IMR-90 (cell line): ENCODE measurements at regions of chr1 and their contacts with region 1.

Region 1: GRCh38 chr1:48572646-48573261 is 100.8 kb upstream of the SPATA6 start:
- DNase-seq: peak; percentile 23
- ATAC-seq: peak; percentile 83
- H3K4me3 ChIP-seq: no peak overlapping the region
- H3K27ac ChIP-seq: no peak overlapping the region
- H3K4me1 ChIP-seq: no peaks in the 10 kb centered on the region
- H3K27me3 ChIP-seq: no peaks in the 10 kb centered on the region
- CTCF ChIP-seq: peak; percentile 40
- POLR2A ChIP-seq: no peak
- RAD21 ChIP-seq: peak; percentile 59

Region 2: DNA sequence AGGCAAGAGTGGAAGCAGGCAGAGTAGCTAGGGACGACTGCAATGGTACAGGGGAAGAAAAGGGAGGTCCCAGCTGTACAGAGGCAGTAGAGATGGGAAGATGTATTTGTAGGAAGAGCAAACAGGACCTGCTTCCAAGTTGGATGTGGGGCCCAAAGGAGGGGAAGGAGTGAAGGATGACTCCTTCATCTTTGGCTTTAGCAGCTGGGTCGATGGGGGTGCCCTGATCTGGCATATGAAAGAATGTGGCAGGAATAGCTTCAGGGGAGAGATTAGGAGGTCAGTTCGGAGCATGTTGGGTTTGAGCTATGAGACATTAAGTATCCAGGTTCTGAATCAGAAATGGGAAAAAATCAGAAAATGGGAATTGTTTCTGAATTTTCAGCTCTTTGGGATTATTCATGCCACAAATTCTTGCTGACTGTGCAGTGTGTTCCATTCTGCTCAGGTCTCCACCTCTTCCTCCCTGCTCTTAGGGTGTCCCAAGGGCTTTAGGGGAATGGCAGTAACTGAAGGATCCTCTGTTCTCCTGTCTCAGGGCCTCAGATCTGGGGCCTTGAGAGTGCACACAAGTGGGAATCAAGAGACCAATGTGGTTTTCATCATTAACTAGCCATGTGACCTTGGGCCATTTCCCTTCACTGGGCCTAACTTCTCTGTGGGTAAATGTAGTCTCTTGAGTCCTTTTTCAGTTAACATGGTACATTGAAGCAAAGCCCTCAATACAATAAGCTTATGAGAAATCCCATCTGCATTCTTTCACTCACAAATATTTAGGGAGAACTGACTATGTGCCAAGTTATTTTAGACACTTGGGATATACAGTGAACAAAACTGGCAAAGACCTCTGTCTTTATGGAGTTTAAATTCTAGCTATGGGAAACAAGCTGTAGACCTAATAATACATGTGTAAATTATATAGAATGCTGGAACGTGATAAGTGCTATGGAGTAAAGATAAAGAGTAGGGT is 25.2 kb before region 1 on chr1:
- CTCF ChIA-PET with region 1: no interaction called
- POLR2A ChIA-PET with region 1: no interaction called
- dilution Hi-C with region 1: no loop called
- in situ Hi-C with region 1: no loop called
- intact Hi-C with region 1: no loop called
- DNase-seq: no peak
- ATAC-seq: no peak
- H3K4me3 ChIP-seq: no peak overlapping the region
- H3K27ac ChIP-seq: no peak overlapping the region
- H3K4me1 ChIP-seq: no peaks in the 10 kb centered on the region
- H3K27me3 ChIP-seq: no peaks in the 10 kb centered on the region
- CTCF ChIP-seq: no peak
- POLR2A ChIP-seq: no peak
- RAD21 ChIP-seq: no peak

Region 3: DNA sequence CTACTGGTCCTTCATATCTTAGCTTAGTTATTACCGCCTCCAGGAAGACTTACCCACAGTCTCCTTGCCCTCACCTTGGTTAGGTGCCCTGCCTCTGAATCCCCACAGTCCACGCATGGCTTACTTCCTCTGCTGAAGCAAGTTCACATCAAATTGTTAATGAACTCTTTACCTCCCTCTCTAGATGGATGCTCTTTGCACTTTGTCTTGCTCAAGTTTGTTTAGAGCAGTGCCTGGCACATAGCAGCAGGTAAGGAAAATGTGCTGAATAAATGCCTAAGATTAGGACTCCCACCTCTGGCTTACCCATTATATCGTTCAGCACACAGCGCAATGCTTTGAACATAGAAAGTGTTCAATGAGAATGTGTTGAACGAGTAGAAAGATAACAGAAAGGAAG is 113.4 kb after region 1 on chr1:
- CTCF ChIA-PET with region 1: no interaction called
- POLR2A ChIA-PET with region 1: no interaction called
- dilution Hi-C with region 1: no loop called
- in situ Hi-C with region 1: no loop called
- intact Hi-C with region 1: no loop called
- DNase-seq: no peak
- ATAC-seq: no peak
- H3K4me3 ChIP-seq: no peak overlapping the region
- H3K27ac ChIP-seq: no peak overlapping the region
- H3K4me1 ChIP-seq: no peaks in the 10 kb centered on the region
- H3K27me3 ChIP-seq: no peaks in the 10 kb centered on the region; the same call in 1 of the 2 replicates
- CTCF ChIP-seq: no peak
- POLR2A ChIP-seq: no peak
- RAD21 ChIP-seq: no peak

Region 4: GRCh38 chr1:48697066-48697707 is 124.4 kb after region 1 on chr1:
- CTCF ChIA-PET with region 1: no interaction called
- POLR2A ChIA-PET with region 1: no interaction called
- dilution Hi-C with region 1: no loop called
- in situ Hi-C with region 1: no loop called
- intact Hi-C with region 1: loop called (anchors 2 kb)
- DNase-seq: peak; percentile 21
- ATAC-seq: peak; percentile 75; the same call in 1 of the 2 replicates
- H3K4me3 ChIP-seq: no peak overlapping the region
- H3K27ac ChIP-seq: no peak overlapping the region
- H3K4me1 ChIP-seq: no peaks in the 10 kb centered on the region
- H3K27me3 ChIP-seq: no peaks in the 10 kb centered on the region; the same call in 1 of the 2 replicates
- CTCF ChIP-seq: peak; percentile 66
- POLR2A ChIP-seq: no peak
- RAD21 ChIP-seq: peak; percentile 34; the same call in 1 of the 2 replicates

Region 5: DNA sequence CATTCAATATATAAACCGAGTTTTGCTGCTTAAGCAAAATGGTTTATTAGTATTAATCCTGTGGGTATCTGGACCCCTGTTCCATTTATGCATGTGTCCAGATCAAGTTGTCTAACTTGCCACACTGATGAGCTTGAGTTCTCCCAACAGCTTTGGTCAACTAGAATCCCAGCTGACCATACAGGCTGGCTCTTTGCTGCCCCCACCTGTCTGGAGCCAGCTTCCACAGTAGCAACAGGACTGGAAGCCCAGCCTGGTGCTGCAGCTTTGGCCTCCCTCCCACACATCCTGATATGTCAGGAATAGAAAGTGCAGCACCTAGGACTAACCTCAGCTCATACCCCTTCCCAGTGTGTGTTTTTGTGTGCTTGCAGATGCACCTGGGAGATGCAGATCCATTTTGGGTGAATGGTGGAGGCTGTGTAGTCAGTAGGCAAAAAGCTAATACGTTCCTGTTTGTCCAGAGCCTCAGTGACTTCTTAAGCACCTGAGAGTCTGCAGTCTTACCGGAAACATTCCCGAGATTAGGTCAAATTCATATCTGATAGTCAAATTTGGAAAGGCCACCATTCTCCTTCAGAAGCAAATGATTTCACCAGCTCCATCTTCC is 244.9 kb after region 1 on chr1:
- CTCF ChIA-PET with region 1: no interaction called
- POLR2A ChIA-PET with region 1: no interaction called
- dilution Hi-C with region 1: no loop called
- in situ Hi-C with region 1: no loop called
- intact Hi-C with region 1: loop called (anchors 2 kb)
- DNase-seq: peak; percentile 31
- ATAC-seq: peak; percentile 73
- H3K4me3 ChIP-seq: no peak overlapping the region
- H3K27ac ChIP-seq: no peak overlapping the region
- H3K4me1 ChIP-seq: no peaks in the 10 kb centered on the region
- H3K27me3 ChIP-seq: no peaks in the 10 kb centered on the region
- CTCF ChIP-seq: peak; percentile 56
- POLR2A ChIP-seq: no peak
- RAD21 ChIP-seq: peak; percentile 62

Region 6: DNA sequence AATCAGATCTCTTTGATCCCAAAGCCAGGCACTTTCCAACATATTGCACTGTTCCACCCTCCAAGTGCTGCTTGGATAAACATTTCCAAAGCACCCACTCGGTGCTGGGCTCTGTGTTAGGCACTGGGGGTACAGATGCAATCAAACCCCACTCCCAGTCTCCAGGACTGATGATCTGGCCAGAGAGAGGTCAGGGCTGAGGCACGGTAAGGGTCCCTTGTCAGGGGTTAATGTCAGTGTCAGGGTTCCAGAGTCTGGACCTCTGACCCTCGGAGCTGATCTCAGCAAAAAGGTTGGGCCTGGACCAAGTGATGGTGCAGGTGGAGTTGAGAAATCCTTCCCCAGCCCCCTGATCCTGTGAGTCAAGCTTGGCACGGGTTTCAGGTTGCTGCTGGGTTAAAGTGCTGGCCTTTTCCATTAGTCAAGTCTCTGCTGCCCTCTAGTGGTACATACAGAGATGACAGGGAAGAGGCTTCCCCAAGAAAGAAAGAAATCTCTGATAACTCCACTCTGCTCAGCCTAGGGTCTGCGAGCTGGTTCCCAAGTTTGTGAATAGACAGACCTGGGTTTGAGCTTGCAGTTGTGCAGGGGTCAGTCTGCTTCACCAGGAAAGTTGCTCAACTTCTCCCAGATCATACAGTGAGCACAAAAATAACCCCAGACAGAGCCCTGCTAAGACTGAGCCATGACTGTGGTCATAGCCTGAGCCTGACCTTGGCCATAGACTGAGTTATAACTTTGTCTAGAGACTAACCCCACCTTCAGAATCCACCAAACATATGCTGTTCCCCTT is 1775.9 kb after region 1 on chr1:
- CTCF ChIA-PET with region 1: no interaction called
- POLR2A ChIA-PET with region 1: no interaction called
- dilution Hi-C with region 1: no loop called
- in situ Hi-C with region 1: no loop called
- intact Hi-C with region 1: loop called (anchors 10 kb)
- DNase-seq: peak; percentile 77
- ATAC-seq: peak; percentile 97
- H3K4me3 ChIP-seq: no peak overlapping the region
- H3K27ac ChIP-seq: no peak overlapping the region
- H3K4me1 ChIP-seq: no peaks in the 10 kb centered on the region
- H3K27me3 ChIP-seq: no peaks in the 10 kb centered on the region; the same call in 1 of the 2 replicates
- CTCF ChIP-seq: peak; percentile 85
- POLR2A ChIP-seq: no peak
- RAD21 ChIP-seq: peak; percentile 84